ENCODE measurements at regions of chr2 and their contacts with region 1.

Region 1: GRCh38 chr2:202703091-202703490 is 68.3 kb downstream of the FAM117B start:
- DNase-seq: no peak
- ATAC-seq: no peak
- H3K4me3 ChIP-seq: no peak overlapping the region
- H3K4me3 Mint-ChIP-seq: no peak overlapping the region
- H3K27ac ChIP-seq: no peak overlapping the region
- H3K27ac Mint-ChIP-seq: peak overlapping the region; percentile 1
- H3K4me1 ChIP-seq: peaks cover 7% of the 10 kb centered on the region
- H3K4me1 Mint-ChIP-seq: peaks cover 66% of the 10 kb centered on the region
- H3K27me3 ChIP-seq: no peaks in the 10 kb centered on the region
- H3K27me3 Mint-ChIP-seq: no peaks in the 10 kb centered on the region
- CTCF ChIP-seq: no peak

Region 2: DNA sequence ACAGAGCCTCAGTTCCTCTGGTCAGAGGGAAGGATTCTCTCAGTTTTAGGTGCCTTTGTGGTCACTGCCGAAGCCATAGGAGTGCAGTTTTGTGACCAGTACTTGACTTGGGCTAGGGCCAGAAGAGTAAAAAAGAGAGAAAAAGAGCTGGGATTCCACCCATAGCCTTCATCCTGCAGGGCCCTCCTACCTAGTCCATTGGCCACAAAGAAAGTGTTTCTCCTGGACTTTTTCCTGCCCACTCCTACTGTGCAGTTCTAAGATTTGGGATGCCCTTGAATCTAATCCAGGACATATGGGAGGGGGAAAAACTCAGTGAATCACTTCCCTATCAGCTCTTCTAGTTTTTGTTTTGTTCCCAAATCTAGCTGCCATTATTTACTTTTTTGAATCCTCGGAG is 42.3 kb before region 1 on chr2:
- CTCF ChIA-PET with region 1: no interaction called
- POLR2A ChIA-PET with region 1: no interaction called
- intact Hi-C with region 1: loop called in 1 of 2 experiments (anchors 5 kb)
- DNase-seq: no peak
- ATAC-seq: no peak
- H3K4me3 ChIP-seq: no peak overlapping the region
- H3K4me3 Mint-ChIP-seq: no peak overlapping the region
- H3K27ac ChIP-seq: no peak overlapping the region
- H3K27ac Mint-ChIP-seq: peak overlapping the region; percentile 37
- H3K4me1 ChIP-seq: peaks cover 28% of the 10 kb centered on the region
- H3K4me1 Mint-ChIP-seq: peaks cover 89% of the 10 kb centered on the region
- H3K27me3 ChIP-seq: no peaks in the 10 kb centered on the region
- H3K27me3 Mint-ChIP-seq: no peaks in the 10 kb centered on the region
- CTCF ChIP-seq: no peak

Region 3: GRCh38 chr2:202750763-202751427 is 47.8 kb after region 1 on chr2:
- CTCF ChIA-PET with region 1: no interaction called
- POLR2A ChIA-PET with region 1: no interaction called
- intact Hi-C with region 1: loop called in 1 of 2 experiments (anchors 5 kb)
- DNase-seq: no peak
- ATAC-seq: peak; percentile 54
- H3K4me3 ChIP-seq: no peak overlapping the region
- H3K4me3 Mint-ChIP-seq: peak overlapping the region; percentile 64
- H3K27ac ChIP-seq: no peak overlapping the region
- H3K27ac Mint-ChIP-seq: peak overlapping the region; percentile 76
- H3K4me1 ChIP-seq: peaks cover 8% of the 10 kb centered on the region
- H3K4me1 Mint-ChIP-seq: peaks cover 88% of the 10 kb centered on the region
- H3K27me3 ChIP-seq: no peaks in the 10 kb centered on the region
- H3K27me3 Mint-ChIP-seq: no peaks in the 10 kb centered on the region
- CTCF ChIP-seq: no peak